Sigmoid colon (tissue), 7 donors: ENCODE measurements at regions of chr18 and their contacts with region 1.

Region 1: GRCh38 chr18:21444465-21445023 is 156.0 kb downstream of the ESCO1 start:
- DNase-seq: no peak
- H3K4me3 ChIP-seq: no peak overlapping the region
- H3K27ac ChIP-seq: no peak overlapping the region
- H3K4me1 ChIP-seq: no peaks in the 10 kb centered on the region
- H3K27me3 ChIP-seq: no peaks in the 10 kb centered on the region
- CTCF ChIP-seq: peak; percentile 45 to 61 (median 52)
- EP300 ChIP-seq: no peak
- POLR2A ChIP-seq: no peak

Region 2: DNA sequence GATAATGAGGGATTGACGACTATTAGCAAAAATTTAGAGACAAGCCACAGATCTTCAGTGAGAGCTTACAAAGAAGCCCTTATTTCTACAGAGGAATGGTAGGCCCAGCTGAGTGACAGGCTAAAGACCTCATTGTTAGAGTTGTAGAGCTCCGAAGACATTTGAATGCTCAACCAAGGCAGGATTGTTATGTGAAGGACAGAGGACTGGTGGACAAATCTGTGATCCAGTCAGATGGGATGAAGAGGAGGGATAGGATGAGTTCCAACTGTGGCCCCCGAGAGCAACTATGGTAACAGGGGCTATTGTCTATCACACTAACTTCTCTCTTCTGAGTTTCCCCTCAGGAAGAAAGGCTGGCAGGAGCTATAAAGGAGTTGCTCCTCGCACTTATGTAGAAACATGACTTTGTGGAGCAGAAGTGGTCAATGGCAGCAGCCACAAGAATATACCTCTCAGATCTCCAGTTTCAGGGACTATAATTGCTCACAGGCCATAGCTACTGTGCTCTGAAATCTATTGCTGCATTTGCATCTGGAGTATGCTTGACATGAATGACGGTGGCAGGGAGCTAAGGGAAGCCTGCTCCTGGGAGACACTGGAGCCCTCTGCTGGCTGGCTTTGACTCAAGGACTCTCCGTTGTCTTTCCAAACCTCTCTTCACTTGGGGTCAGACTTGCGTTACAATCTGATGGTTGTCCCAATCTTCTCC is 252.8 kb before region 1 on chr18:
- intact Hi-C with region 1: loop called (anchors 2 kb)
- DNase-seq: no peak
- H3K4me3 ChIP-seq: no peak overlapping the region
- H3K27ac ChIP-seq: no peak overlapping the region
- H3K4me1 ChIP-seq: no peaks in the 10 kb centered on the region
- H3K27me3 ChIP-seq: no peaks in the 10 kb centered on the region
- CTCF ChIP-seq: peak in 2 of 4 experiments; percentile 20 to 32
- EP300 ChIP-seq: no peak
- POLR2A ChIP-seq: no peak